Heart left ventricle (tissue), 16 donors: ENCODE measurements at regions of chr2 and their contacts with region 1.

Region 1: GRCh38 chr2:67650291-67651133 is 253.4 kb downstream of the ETAA1 start:
- DNase-seq: peak; percentile 79 to 88 (median 85)
- ATAC-seq: peak; percentile 94 to 95 (median 94)
- H3K4me3 ChIP-seq: no peak overlapping the region
- H3K27ac ChIP-seq: peak overlapping the region in 11 of 12 donors; percentile 17 to 84 (median 77)
- H3K4me1 ChIP-seq: peaks cover 0 to 39% (median 21%) of the 10 kb centered on the region in 12 donors
- H3K27me3 ChIP-seq: no peaks in the 10 kb centered on the region
- CTCF ChIP-seq: peak; percentile 25 to 83 (median 66)
- POLR2A ChIP-seq: no peak

Region 2: DNA sequence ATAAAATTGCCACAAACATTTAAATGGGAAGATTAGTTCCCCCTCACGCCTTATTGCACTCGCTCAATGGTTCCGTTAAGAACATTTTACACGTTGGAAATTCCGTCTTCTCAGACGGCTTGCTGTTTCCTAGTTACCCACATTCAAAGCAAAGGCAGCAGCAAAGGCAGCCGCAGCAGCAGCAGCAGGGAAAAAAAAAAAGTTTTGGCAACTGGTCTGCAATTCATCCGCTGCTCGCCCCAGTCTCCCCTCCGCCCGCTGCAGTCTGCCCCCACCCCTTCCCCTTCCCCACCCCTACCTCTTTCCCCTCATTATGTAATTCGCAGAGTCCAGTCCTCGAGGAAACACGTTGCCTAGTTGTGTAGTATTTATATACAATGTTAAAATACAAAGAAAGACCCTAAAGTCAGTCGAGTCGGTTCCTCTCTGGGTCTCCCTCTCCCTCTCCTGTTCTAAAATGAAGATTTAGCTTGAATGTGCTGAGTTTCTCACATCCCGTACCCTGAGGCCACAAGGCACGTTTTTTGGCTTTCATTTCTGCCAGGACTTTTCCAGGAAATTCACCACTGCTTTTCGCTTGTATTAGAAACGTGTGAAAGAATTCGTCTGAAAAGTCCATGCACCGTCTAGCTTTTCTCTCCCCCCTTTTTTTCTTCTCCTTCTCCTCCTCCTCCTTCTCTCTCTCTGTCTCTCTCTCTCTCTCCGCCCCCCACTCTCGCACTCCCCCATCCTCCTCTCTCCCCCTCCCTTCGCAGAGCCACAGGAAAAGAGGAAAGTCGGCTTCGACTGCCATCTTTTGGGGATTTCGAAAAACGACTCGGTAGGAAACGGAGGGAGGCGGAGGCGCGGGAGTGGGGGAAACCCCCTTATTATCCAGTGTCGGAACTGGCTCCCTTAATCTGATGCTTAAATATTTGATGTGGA is 1075.5 kb before region 1 on chr2:
- intact Hi-C with region 1: loop called in 4 of 10 experiments (anchors 2 to 5 kb)
- DNase-seq: peak; percentile 46 to 68 (median 61)
- ATAC-seq: peak; percentile 51 to 81 (median 71)
- H3K4me3 ChIP-seq: peak overlapping the region; percentile 27 to 66 (median 52)
- H3K27ac ChIP-seq: peak overlapping the region in 5 of 12 donors; percentile 27 to 97 (median 53)
- H3K4me1 ChIP-seq: peaks cover 0 to 35% (median 25%) of the 10 kb centered on the region in 12 donors
- H3K27me3 ChIP-seq: peaks cover 36 to 63% (median 46%) of the 10 kb centered on the region in 9 donors
- CTCF ChIP-seq: peak in 11 of 12 donors; percentile 28 to 63 (median 46)
- POLR2A ChIP-seq: no peak

Region 3: GRCh38 chr2:67397143-67397986 is 253.1 kb before region 1 on chr2 and contains the start of gene ETAA1:
- intact Hi-C with region 1: loop called in 1 of 10 experiments (anchors 5 kb)
- DNase-seq: peak; percentile 94 to 97 (median 95)
- ATAC-seq: peak; percentile 100
- H3K4me3 ChIP-seq: peak within 1 kb of the TSS; percentile 66 to 99 (median 94)
- H3K27ac ChIP-seq: peak within 1 kb of the TSS; percentile 77 to 95 (median 92)
- H3K4me1 ChIP-seq: peaks cover 0 to 28% (median 13%) of the 10 kb centered on the region in 12 donors
- H3K27me3 ChIP-seq: no peaks in the 10 kb centered on the region
- CTCF ChIP-seq: no peak
- POLR2A ChIP-seq: peak in 1 of 2 donors; percentile 63
- total RNA-seq, gene ETAA1: 4.4 to 7.8 (median 5.3) TPM

Region 4: GRCh38 chr2:67486041-67486796 is 164.3 kb before region 1 on chr2:
- intact Hi-C with region 1: loop called in 1 of 10 experiments (anchors 10 kb)
- DNase-seq: peak in 3 of 5 donors; percentile 52 to 57 (median 55)
- ATAC-seq: peak in 3 of 4 donors; percentile 68 to 89 (median 85)
- H3K4me3 ChIP-seq: no peak overlapping the region
- H3K27ac ChIP-seq: no peak overlapping the region
- H3K4me1 ChIP-seq: peaks cover 0 to 4% (median 0%) of the 10 kb centered on the region in 12 donors
- H3K27me3 ChIP-seq: no peaks in the 10 kb centered on the region
- CTCF ChIP-seq: no peak
- POLR2A ChIP-seq: no peak

Region 5: DNA sequence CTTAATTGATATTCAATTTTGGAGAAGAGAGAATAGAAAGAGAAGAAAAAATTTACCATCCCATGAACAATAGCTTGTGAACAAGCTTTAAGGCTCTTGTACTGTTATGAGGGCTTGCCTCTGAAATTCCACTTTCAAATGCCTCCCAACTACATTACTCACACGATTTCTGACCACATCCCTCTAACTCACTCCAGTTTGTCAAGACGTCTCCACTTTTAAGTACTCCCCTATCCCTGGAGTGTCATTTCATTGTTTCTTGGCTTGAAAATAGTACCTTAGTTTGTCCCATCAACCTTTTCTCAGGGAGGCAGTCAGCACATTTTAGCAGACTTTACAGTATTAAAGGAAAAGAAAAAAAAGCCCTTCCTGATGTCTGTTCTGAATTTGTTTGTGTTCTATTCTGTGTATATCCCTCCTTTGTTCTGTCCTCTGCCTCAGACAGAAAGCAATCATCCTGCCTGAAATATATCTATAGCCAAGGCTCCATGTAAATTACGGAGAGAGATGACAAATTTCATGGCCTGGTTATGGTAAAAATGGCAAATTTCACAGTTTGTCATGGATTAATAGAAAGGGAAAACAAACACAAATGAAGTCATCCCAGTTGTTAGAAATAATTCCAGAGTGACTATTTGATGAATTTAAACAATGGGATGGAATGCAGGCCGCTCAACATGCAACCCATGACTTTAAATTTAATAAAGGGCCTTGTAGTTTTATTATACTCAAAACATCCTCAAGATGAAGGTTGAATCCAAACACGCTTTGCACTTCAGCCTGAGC is 24.6 kb before region 1 on chr2:
- intact Hi-C with region 1: no loop called
- DNase-seq: no peak
- ATAC-seq: peak in 1 of 4 donors; percentile 29
- H3K4me3 ChIP-seq: no peak overlapping the region
- H3K27ac ChIP-seq: peak overlapping the region in 2 of 12 donors; percentile 25 to 30
- H3K4me1 ChIP-seq: no peaks in the 10 kb centered on the region
- H3K27me3 ChIP-seq: no peaks in the 10 kb centered on the region
- CTCF ChIP-seq: no peak
- POLR2A ChIP-seq: no peak

Region 6: DNA sequence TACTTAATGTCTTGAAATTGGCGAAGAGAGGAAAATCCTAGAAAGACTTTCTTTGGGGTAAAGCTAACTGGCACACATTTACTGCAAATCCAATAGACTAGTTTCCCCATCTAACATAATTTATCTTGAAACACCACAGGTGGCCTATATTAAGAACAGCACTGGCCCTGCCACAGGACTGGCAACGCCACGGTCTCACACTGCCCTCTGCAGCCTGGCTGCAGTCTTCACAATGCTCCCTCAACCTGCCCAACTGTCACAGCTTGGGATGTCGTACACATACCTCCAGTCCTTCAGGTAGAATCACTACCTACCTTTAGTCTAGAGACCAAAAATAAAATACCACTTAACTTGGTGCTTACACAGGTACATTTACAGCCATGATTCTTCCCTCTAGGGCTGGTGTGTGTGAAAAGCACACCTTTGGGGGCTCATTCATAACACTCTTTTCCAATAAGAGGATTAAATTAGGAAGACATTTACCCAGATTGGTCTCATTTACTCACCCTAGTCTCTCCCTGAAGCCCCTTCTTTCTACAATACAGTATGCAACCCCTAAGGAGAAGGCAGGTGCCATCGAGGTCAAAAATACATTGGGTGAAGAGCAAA is 190.1 kb after region 1 on chr2:
- intact Hi-C with region 1: loop called in 5 of 10 experiments (anchors 2 to 10 kb)
- DNase-seq: peak; percentile 61 to 82 (median 70)
- ATAC-seq: peak; percentile 94 to 99 (median 98)
- H3K4me3 ChIP-seq: no peak overlapping the region
- H3K27ac ChIP-seq: no peak overlapping the region
- H3K4me1 ChIP-seq: no peaks in the 10 kb centered on the region
- H3K27me3 ChIP-seq: peaks cover 0 to 4% (median 0%) of the 10 kb centered on the region in 9 donors
- CTCF ChIP-seq: peak; percentile 56 to 84 (median 74)
- POLR2A ChIP-seq: no peak